CD8-positive, alpha-beta T cell (primary cell): ENCODE measurements at regions of chr6 and their contacts with region 1.

Region 1: DNA sequence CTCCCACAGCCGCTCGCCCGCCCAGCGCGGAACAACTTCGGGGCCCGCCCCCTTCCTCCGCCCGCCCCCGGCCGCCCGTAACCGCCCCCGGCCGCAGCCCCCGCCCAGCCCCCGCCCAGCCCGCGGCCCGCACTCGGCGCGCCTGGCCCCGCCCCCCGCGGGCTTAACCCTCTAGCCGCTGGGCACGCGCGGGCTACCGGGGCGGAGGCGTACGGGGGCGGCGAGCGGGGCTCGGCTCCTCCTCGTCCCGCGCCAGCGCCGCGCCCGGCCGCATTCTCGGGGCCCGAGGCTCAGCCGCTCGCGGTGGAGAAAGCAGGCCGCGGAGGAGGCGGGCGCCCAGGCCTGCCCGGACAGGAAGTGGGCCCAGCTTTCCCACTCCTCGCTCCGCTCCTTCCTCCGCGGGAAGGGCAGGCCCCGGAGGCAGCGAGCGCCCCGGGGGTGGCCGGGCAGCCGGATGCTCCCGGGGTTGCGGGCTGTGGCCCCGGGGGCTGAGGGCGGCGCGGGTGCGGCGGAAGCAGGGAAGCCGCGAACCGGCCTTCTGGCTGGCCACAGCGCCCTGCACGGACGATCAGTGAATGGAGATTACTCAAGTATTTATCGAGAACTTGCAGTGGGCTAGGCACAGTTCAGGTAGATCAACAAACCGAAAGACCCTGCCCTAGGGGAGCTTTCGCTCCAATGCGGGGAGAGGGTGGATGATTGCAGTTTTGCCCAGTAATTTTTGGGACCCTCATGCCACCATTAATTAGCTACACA is at the start of gene TRAM2:
- DNase-seq: peak; percentile 62 to 89 (median 77)
- ATAC-seq: peak; percentile 78
- H3K4me3 ChIP-seq: peak within 1 kb of the TSS; percentile 81 to 82
- H3K4me3 Mint-ChIP-seq: peak within 1 kb of the TSS; percentile 87
- H3K27ac ChIP-seq: peak within 1 kb of the TSS; percentile 58
- H3K27ac Mint-ChIP-seq: peak within 1 kb of the TSS; percentile 87
- H3K4me1 ChIP-seq: peaks cover 44% of the 10 kb centered on the region
- H3K4me1 Mint-ChIP-seq: peaks cover 49% of the 10 kb centered on the region
- H3K27me3 ChIP-seq: no peaks in the 10 kb centered on the region
- H3K27me3 Mint-ChIP-seq: no peaks in the 10 kb centered on the region
- CTCF ChIP-seq: no peak
- total RNA-seq, gene TRAM2: 4.6 to 4.9 TPM

Region 2: DNA sequence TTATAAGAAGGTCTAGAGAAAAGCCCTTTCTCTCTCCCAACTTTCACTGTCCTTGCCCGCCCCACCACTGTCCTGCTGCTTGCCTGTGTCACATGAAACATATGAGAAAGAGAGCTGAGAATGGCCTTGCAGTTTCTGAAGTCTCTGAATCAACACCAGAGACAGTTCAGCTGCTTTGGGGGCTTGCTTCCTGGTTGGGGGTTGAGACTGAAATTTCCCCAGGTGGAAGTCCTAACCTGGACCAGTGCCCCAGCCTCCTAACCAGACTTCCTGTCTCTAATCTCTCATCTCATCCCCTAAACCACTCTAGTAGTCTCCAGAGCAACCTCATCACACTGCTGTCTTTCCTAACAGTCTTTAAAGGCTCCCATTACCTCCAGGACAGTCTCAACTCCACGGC is 11.0 kb before region 1 on chr6:
- CTCF ChIA-PET with region 1: interaction called, 10 read pairs
- POLR2A ChIA-PET with region 1: interaction called, 4 read pairs
- intact Hi-C with region 1: no loop called
- DNase-seq: no peak
- ATAC-seq: no peak
- H3K4me3 ChIP-seq: no peak overlapping the region
- H3K4me3 Mint-ChIP-seq: no peak overlapping the region
- H3K27ac ChIP-seq: no peak overlapping the region
- H3K27ac Mint-ChIP-seq: no peak overlapping the region
- H3K4me1 ChIP-seq: peaks cover 9% of the 10 kb centered on the region
- H3K4me1 Mint-ChIP-seq: peaks cover 60% of the 10 kb centered on the region
- H3K27me3 ChIP-seq: no peaks in the 10 kb centered on the region
- H3K27me3 Mint-ChIP-seq: no peaks in the 10 kb centered on the region
- CTCF ChIP-seq: no peak

Region 3: GRCh38 chr6:52670502-52671409 is 93.6 kb after region 1 on chr6 and contains the start of gene TMEM14A:
- CTCF ChIA-PET with region 1: no interaction called
- POLR2A ChIA-PET with region 1: no interaction called
- intact Hi-C with region 1: loop called (anchors 1 to 2 kb)
- DNase-seq: peak; percentile 75 to 96 (median 90)
- ATAC-seq: peak; percentile 97
- H3K4me3 ChIP-seq: peak within 1 kb of the TSS; percentile 78 to 83
- H3K4me3 Mint-ChIP-seq: peak within 1 kb of the TSS; percentile 90
- H3K27ac ChIP-seq: peak within 1 kb of the TSS; percentile 28 to 36
- H3K27ac Mint-ChIP-seq: peak within 1 kb of the TSS; percentile 81
- H3K4me1 ChIP-seq: peaks cover 13% of the 10 kb centered on the region
- H3K4me1 Mint-ChIP-seq: peaks cover 30% of the 10 kb centered on the region
- H3K27me3 ChIP-seq: no peaks in the 10 kb centered on the region
- H3K27me3 Mint-ChIP-seq: no peaks in the 10 kb centered on the region
- CTCF ChIP-seq: no peak
- total RNA-seq, gene TMEM14A: 1.7 to 1.8 TPM

Region 4: GRCh38 chr6:53064726-53065215 is 487.6 kb after region 1 on chr6:
- CTCF ChIA-PET with region 1: no interaction called
- POLR2A ChIA-PET with region 1: no interaction called
- intact Hi-C with region 1: loop called (anchors 1 to 2 kb)
- DNase-seq: peak; percentile 90 to 98 (median 96)
- ATAC-seq: peak; percentile 83
- H3K4me3 ChIP-seq: peak overlapping the region; percentile 79 to 83
- H3K4me3 Mint-ChIP-seq: peak overlapping the region; percentile 100
- H3K27ac ChIP-seq: peak overlapping the region; percentile 55 to 81
- H3K27ac Mint-ChIP-seq: peak overlapping the region; percentile 98
- H3K4me1 ChIP-seq: peaks cover 39% of the 10 kb centered on the region
- H3K4me1 Mint-ChIP-seq: peaks cover 60% of the 10 kb centered on the region
- H3K27me3 ChIP-seq: no peaks in the 10 kb centered on the region
- H3K27me3 Mint-ChIP-seq: no peaks in the 10 kb centered on the region
- CTCF ChIP-seq: no peak

Region 5: GRCh38 chr6:53544470-53545308 is 967.5 kb after region 1 on chr6 and contains the start of gene GCLC:
- CTCF ChIA-PET with region 1: no interaction called
- POLR2A ChIA-PET with region 1: no interaction called
- intact Hi-C with region 1: loop called (anchors 10 kb)
- DNase-seq: peak; percentile 75 to 95 (median 87)
- ATAC-seq: peak; percentile 67
- H3K4me3 ChIP-seq: peak within 1 kb of the TSS; percentile 69 to 79
- H3K4me3 Mint-ChIP-seq: peak within 1 kb of the TSS; percentile 99
- H3K27ac ChIP-seq: peak within 1 kb of the TSS; percentile 48 to 62
- H3K27ac Mint-ChIP-seq: peak within 1 kb of the TSS; percentile 89
- H3K4me1 ChIP-seq: peaks cover 39% of the 10 kb centered on the region
- H3K4me1 Mint-ChIP-seq: peaks cover 68% of the 10 kb centered on the region
- H3K27me3 ChIP-seq: no peaks in the 10 kb centered on the region
- H3K27me3 Mint-ChIP-seq: no peaks in the 10 kb centered on the region
- CTCF ChIP-seq: peak; percentile 80
- total RNA-seq, gene GCLC: 13.1 to 13.6 TPM